Caco-2 (cell line): ENCODE measurements at regions of chr2 and their contacts with region 1.

Region 1: GRCh38 chr2:126971481-126972278 is 73.0 kb downstream of the TEX51 start:
- DNase-seq: peak; percentile 72 to 81
- H3K4me3 ChIP-seq: no peak overlapping the region
- H3K4me3 Mint-ChIP-seq: peak overlapping the region; percentile 33
- H3K27ac Mint-ChIP-seq: no peak overlapping the region
- H3K4me1 ChIP-seq: peaks cover 3% of the 10 kb centered on the region; the same call in 1 of the 2 replicates
- H3K4me1 Mint-ChIP-seq: peaks cover 11% of the 10 kb centered on the region
- H3K27me3 ChIP-seq: no peaks in the 10 kb centered on the region
- H3K27me3 Mint-ChIP-seq: peaks cover 7% of the 10 kb centered on the region
- CTCF ChIP-seq: peak; percentile 84 to 96

Region 2: DNA sequence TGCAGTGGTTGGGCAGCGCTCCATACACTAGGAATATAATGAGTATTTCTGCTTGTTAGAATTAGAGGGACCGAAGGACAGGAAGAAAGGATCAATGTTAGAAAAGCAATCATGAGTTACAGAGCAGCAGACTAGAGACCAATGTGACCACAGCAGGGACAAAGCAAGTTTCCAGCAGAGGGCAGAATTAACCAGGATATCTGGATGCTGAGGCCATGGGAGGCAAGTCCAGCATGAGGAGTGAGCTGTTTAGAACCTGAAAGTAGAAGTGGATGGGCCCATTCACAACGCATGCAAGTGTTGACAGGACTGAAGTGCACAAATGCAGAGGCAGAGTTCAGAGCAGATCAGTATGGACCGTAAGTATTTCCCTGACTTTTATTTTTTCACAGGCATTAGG is 1226.2 kb before region 1 on chr2:
- CTCF ChIA-PET with region 1: no interaction called
- POLR2A ChIA-PET with region 1: no interaction called
- intact Hi-C with region 1: loop called (anchors 5 kb)
- DNase-seq: peak; percentile 57 to 71
- H3K4me3 ChIP-seq: no peak overlapping the region
- H3K4me3 Mint-ChIP-seq: no peak overlapping the region
- H3K27ac Mint-ChIP-seq: no peak overlapping the region
- H3K4me1 ChIP-seq: no peaks in the 10 kb centered on the region
- H3K4me1 Mint-ChIP-seq: no peaks in the 10 kb centered on the region
- H3K27me3 ChIP-seq: no peaks in the 10 kb centered on the region
- H3K27me3 Mint-ChIP-seq: no peaks in the 10 kb centered on the region
- CTCF ChIP-seq: peak; percentile 40 to 62

Region 3: DNA sequence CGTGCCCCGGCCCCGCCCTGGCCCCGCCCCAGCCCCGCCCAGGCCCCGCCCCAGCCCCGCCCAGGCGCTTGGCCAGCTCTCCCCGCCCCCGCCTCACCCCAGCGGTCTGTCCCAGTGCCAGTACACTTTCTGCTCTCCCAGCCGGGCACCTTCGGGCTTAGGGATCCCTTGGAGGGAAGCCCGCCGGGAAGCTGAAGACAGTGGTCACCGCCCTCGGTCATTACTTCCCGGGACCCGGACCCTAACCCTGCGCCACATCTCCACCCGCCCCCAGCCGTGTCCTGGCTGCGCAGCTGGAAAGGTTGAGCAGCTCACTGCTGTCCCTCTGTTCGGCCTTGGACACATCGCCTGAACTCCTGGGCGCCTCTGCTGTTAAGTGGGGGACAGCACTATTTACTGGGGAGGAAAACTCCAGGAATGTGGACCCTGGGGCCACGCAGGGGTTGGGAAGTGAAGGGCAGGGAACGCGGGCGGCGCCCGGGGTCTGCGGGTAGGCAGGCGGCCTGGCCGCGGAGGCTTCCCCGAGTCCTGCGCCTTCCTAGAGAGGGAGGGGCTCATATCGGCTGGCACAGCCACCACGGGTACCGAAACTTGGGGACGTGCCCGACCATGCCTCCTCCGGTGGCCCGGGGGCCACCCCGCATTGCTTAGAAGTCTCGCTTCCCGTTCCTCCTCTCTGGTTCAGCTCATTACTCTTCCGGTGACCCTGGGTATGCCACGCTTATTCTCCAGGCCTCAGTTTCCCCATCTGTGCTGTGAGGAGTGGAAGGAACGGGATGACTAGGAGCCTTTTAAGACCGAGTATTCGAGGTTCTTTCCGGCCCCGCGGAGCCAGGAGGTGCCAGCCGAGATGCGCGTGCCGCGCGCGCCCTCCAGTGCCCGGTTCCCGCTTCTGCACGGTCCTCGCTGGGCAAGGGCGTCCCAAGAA is 194.7 kb before region 1 on chr2:
- CTCF ChIA-PET with region 1: interaction called, 6 read pairs
- POLR2A ChIA-PET with region 1: no interaction called
- intact Hi-C with region 1: loop called (anchors 5 kb)
- DNase-seq: peak; percentile 76 to 87
- H3K4me3 ChIP-seq: peak overlapping the region; percentile 44
- H3K4me3 Mint-ChIP-seq: peak overlapping the region; percentile 88
- H3K27ac Mint-ChIP-seq: peak overlapping the region; percentile 29
- H3K4me1 ChIP-seq: no peaks in the 10 kb centered on the region
- H3K4me1 Mint-ChIP-seq: peaks cover 6% of the 10 kb centered on the region
- H3K27me3 ChIP-seq: peaks cover 4% of the 10 kb centered on the region; the same call in 1 of the 2 replicates
- H3K27me3 Mint-ChIP-seq: peaks cover 28% of the 10 kb centered on the region
- CTCF ChIP-seq: peak; percentile 94 to 98

Region 4: DNA sequence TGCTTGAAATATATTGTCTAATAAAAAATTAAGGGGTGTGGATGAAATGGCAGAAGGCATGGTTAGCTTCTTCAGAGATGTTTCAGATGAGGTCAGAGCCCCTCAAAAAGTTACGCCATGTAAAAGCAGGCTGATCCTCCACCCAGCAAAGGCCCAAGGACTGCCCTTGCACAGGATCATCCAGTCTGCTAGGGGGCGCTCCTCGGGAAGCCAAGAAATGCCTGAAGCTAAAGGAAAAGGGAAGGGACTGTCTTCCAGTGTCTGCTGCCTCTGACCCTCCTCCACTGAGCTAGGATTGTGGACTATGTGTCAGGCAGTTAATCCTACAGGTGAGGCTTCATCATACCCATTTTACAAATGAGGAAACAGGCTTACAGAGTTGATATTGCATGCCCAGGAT is 106.8 kb before region 1 on chr2:
- CTCF ChIA-PET with region 1: interaction called, 3 read pairs
- POLR2A ChIA-PET with region 1: no interaction called
- intact Hi-C with region 1: loop called (anchors 10 kb)
- DNase-seq: peak in 1 of 2 experiments; percentile 38
- H3K4me3 ChIP-seq: no peak overlapping the region
- H3K4me3 Mint-ChIP-seq: no peak overlapping the region
- H3K27ac Mint-ChIP-seq: no peak overlapping the region
- H3K4me1 ChIP-seq: no peaks in the 10 kb centered on the region
- H3K4me1 Mint-ChIP-seq: no peaks in the 10 kb centered on the region
- H3K27me3 ChIP-seq: no peaks in the 10 kb centered on the region
- H3K27me3 Mint-ChIP-seq: peaks cover 9% of the 10 kb centered on the region
- CTCF ChIP-seq: no peak

Region 5: GRCh38 chr2:127003070-127003800 is 31.6 kb after region 1 on chr2:
- CTCF ChIA-PET with region 1: interaction called, 17 read pairs
- POLR2A ChIA-PET with region 1: no interaction called
- intact Hi-C with region 1: no loop called
- DNase-seq: peak; percentile 68 to 84
- H3K4me3 ChIP-seq: no peak overlapping the region
- H3K4me3 Mint-ChIP-seq: peak overlapping the region; percentile 1
- H3K27ac Mint-ChIP-seq: peak overlapping the region; percentile 6
- H3K4me1 ChIP-seq: peaks cover 26% of the 10 kb centered on the region
- H3K4me1 Mint-ChIP-seq: peaks cover 19% of the 10 kb centered on the region
- H3K27me3 ChIP-seq: no peaks in the 10 kb centered on the region
- H3K27me3 Mint-ChIP-seq: no peaks in the 10 kb centered on the region
- CTCF ChIP-seq: peak; percentile 22 to 62

Region 6: DNA sequence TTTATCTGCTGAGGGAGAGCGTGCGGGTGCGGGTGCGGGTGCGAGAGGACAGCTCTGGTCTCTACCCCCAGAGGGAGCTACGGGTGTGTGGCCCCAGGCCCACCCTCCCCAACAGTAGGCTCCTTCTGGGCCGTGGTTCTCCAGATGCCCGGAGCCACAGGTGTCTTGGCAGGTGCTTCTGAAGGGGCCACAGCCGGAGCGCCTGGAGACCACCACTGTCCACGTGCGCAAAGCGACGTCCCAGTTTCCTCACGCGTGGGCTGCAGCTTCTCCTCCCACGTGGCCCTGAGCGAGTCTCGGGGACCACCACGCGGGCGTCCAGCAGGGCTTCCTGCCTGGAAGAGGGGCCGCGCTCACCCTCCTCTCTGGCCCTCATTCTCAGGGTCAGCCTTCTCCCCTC is 44.6 kb after region 1 on chr2:
- CTCF ChIA-PET with region 1: no interaction called
- POLR2A ChIA-PET with region 1: no interaction called
- intact Hi-C with region 1: no loop called
- DNase-seq: no peak
- H3K4me3 ChIP-seq: no peak overlapping the region
- H3K4me3 Mint-ChIP-seq: no peak overlapping the region
- H3K27ac Mint-ChIP-seq: no peak overlapping the region
- H3K4me1 ChIP-seq: peaks cover 19% of the 10 kb centered on the region
- H3K4me1 Mint-ChIP-seq: peaks cover 22% of the 10 kb centered on the region
- H3K27me3 ChIP-seq: no peaks in the 10 kb centered on the region
- H3K27me3 Mint-ChIP-seq: no peaks in the 10 kb centered on the region
- CTCF ChIP-seq: no peak